ENCODE measurements at regions of chr3 and their contacts with region 1.

Region 1: GRCh38 chr3:46488735-46489361 is 8.9 kb upstream of the RTP3 start:
- DNase-seq: peak; percentile 72
- ATAC-seq: peak; percentile 97
- H3K4me3 ChIP-seq: no peak overlapping the region
- H3K27ac ChIP-seq: no peak overlapping the region
- H3K4me1 ChIP-seq: no peaks in the 10 kb centered on the region
- H3K27me3 ChIP-seq: no peaks in the 10 kb centered on the region
- CTCF ChIP-seq: peak; percentile 96

Region 2: GRCh38 chr3:46337911-46338310 is 150.9 kb before region 1 on chr3:
- CTCF ChIA-PET with region 1: no interaction called
- POLR2A ChIA-PET with region 1: no interaction called
- in situ Hi-C with region 1: no loop called
- intact Hi-C with region 1: no loop called
- DNase-seq: no peak
- ATAC-seq: no peak
- H3K4me3 ChIP-seq: no peak overlapping the region
- H3K27ac ChIP-seq: no peak overlapping the region
- H3K4me1 ChIP-seq: no peaks in the 10 kb centered on the region
- H3K27me3 ChIP-seq: no peaks in the 10 kb centered on the region
- CTCF ChIP-seq: no peak

Region 3: DNA sequence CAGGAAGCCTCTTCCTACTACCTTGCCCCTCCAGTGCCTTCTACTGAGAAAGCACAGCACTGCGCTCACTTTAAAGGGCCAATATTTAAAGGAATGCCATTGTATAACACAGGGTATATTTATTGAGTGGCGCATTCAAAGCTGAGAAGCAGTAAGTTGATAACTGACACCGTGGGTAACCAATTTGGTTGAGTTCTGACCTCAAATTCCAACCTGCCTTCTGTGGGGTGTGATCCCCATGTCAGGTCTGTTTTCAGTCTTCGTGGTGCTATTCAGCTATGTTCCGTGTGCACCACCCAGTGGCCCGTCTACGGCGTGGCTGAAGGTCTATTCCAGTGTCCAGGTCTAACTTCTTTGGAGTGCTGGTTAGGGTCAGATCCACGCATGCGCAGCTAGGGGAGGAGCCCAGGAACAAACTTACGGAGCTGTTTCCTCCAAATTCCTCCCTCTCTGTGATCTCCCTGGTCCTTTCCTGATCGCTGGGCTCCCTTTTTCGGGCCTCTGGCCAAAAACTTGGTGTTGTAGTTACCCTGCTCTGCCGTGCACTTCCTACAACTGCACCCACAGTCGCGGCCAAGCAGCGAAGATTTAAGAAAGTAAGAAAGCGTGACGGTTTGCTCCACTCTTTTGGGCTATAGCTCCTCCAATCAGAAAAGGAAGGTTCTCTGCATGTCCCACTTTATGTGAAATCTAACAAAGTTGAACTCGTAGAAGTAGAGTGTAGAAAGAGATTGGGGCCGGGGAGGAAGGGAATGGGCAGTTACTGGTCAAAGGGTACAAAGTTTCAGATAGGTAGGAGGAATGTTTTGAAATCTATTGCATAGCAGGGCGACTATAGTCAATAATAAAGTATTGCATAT is 69.6 kb after region 1 on chr3:
- CTCF ChIA-PET with region 1: interaction called, 21 read pairs
- POLR2A ChIA-PET with region 1: no interaction called
- in situ Hi-C with region 1: no loop called
- intact Hi-C with region 1: loop called (anchors 2 kb)
- DNase-seq: peak; percentile 71
- ATAC-seq: peak; percentile 100
- H3K4me3 ChIP-seq: peak overlapping the region; percentile 57 to 74
- H3K27ac ChIP-seq: peak overlapping the region; percentile 71; the same call in 1 of the 2 replicates
- H3K4me1 ChIP-seq: no peaks in the 10 kb centered on the region; the same call in 1 of the 2 replicates
- H3K27me3 ChIP-seq: no peaks in the 10 kb centered on the region; the same call in 1 of the 2 replicates
- CTCF ChIP-seq: peak; percentile 80

Region 4: GRCh38 chr3:46629551-46630517 is 141.0 kb after region 1 on chr3:
- CTCF ChIA-PET with region 1: interaction called, 26 read pairs
- POLR2A ChIA-PET with region 1: interaction called, 3 read pairs
- in situ Hi-C with region 1: no loop called
- intact Hi-C with region 1: loop called (anchors 5 kb)
- DNase-seq: peak; percentile 32
- ATAC-seq: peak; percentile 97
- H3K4me3 ChIP-seq: peak overlapping the region in 1 of 2 experiments; percentile 37; a peak in 2 of 4 replicates
- H3K27ac ChIP-seq: no peak overlapping the region
- H3K4me1 ChIP-seq: no peaks in the 10 kb centered on the region
- H3K27me3 ChIP-seq: 0 out of 2 replicates have a peak, but pooled peaks cover 2% of the 10 kb centered on the region
- CTCF ChIP-seq: peak; percentile 95